CD8-positive, alpha-beta T cell (primary cell): ENCODE measurements at regions of chr1 and their contacts with region 1.

Region 1: DNA sequence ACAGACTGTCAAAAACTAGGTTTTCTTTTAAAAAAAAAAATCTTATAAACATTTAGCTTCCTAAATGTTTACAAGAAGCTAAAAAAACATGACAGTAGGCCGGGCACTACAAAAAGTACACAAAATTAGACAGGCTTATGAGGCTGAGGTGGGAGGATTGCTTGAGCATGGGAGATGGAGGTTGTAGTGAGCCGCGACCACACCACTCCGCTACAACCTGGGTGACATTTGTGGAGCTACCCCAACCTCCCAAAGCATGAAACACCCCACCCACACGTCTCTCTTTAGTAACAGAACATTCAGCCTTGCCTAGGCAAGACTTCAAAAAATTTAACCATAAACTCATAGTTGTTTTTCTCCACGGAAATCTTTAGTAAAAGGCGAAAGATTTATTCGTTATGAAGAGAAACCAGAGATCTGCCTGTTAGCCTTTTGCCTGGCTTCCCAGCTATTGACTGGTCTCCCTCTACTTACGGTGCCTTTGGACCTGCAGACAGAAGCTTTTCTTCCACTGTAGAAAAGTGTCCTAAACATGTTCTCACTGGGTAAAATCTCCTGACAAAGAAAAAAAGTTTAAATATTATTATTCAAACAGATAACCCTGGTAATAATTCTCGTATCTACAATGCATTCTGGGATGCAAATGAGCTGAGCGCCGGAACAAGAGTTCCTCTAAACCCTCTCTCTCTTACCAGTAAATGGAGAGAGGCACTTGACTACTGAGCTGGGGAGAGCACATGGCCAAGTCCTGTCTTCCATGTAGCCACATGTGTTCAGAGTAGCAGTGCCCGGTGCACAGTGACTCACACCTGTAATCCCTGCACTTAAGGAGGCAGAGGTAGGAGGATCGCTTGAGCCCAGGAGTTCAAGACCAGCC is 9.2 kb downstream of the RNU5D-1 start:
- DNase-seq: peak; percentile 36 to 92 (median 61)
- ATAC-seq: peak; percentile 84
- H3K4me3 ChIP-seq: peak overlapping the region in 1 of 2 experiments; percentile 11
- H3K4me3 Mint-ChIP-seq: peak overlapping the region; percentile 54
- H3K27ac ChIP-seq: peak overlapping the region; percentile 70 to 88
- H3K27ac Mint-ChIP-seq: peak overlapping the region; percentile 96
- H3K4me1 ChIP-seq: peaks cover 77% of the 10 kb centered on the region
- H3K4me1 Mint-ChIP-seq: peaks cover 73% of the 10 kb centered on the region
- H3K27me3 ChIP-seq: no peaks in the 10 kb centered on the region
- H3K27me3 Mint-ChIP-seq: no peaks in the 10 kb centered on the region
- CTCF ChIP-seq: no peak

Region 2: GRCh38 chr1:44318097-44319088 is 403.3 kb before region 1 on chr1:
- CTCF ChIA-PET with region 1: no interaction called
- POLR2A ChIA-PET with region 1: no interaction called
- intact Hi-C with region 1: no loop called
- DNase-seq: peak in 8 of 9 experiments; percentile 12 to 67 (median 50)
- ATAC-seq: no peak
- H3K4me3 ChIP-seq: no peak overlapping the region
- H3K4me3 Mint-ChIP-seq: no peak overlapping the region
- H3K27ac ChIP-seq: no peak overlapping the region
- H3K27ac Mint-ChIP-seq: no peak overlapping the region
- H3K4me1 ChIP-seq: no peaks in the 10 kb centered on the region
- H3K4me1 Mint-ChIP-seq: peaks cover 5% of the 10 kb centered on the region
- H3K27me3 ChIP-seq: no peaks in the 10 kb centered on the region
- H3K27me3 Mint-ChIP-seq: no peaks in the 10 kb centered on the region
- CTCF ChIP-seq: peak; percentile 89

Region 3: GRCh38 chr1:44523593-44524591 is 197.8 kb before region 1 on chr1:
- CTCF ChIA-PET with region 1: no interaction called
- POLR2A ChIA-PET with region 1: no interaction called
- intact Hi-C with region 1: no loop called
- DNase-seq: no peak
- ATAC-seq: no peak
- H3K4me3 ChIP-seq: no peak overlapping the region
- H3K4me3 Mint-ChIP-seq: no peak overlapping the region
- H3K27ac ChIP-seq: no peak overlapping the region
- H3K27ac Mint-ChIP-seq: no peak overlapping the region
- H3K4me1 ChIP-seq: no peaks in the 10 kb centered on the region
- H3K4me1 Mint-ChIP-seq: peaks cover 1% of the 10 kb centered on the region
- H3K27me3 ChIP-seq: no peaks in the 10 kb centered on the region
- H3K27me3 Mint-ChIP-seq: no peaks in the 10 kb centered on the region
- CTCF ChIP-seq: no peak

Region 4: DNA sequence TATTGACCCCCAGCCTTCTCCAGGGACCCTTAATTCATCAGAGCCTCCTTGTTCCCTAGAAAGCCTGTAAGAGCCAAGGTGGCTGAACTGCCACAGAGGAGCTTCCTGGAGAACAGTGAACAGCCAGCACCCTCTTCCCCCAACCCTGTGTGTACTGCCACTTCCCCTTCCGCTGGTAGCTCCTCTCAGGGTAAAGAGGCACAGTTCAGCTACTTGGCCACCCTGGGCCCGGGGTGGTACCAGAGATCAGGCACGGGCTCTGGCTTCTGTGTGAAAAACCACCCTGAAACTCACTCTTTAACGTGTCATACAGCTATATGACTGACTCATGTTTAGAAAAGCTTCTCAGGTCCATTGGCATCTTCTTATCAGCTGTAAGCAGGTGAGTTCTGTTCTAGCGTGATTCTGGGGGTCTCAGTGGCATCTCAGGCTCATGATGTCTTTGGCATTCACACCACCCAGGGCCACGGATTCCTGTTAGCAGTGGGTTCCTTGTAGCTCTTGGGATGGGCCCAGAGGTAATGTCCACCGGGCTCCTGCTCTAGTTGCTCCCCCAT is 24.9 kb before region 1 on chr1:
- CTCF ChIA-PET with region 1: interaction called, 4 read pairs
- POLR2A ChIA-PET with region 1: interaction called, 10 read pairs
- intact Hi-C with region 1: no loop called
- DNase-seq: peak; percentile 12 to 75 (median 44)
- ATAC-seq: peak; percentile 98
- H3K4me3 ChIP-seq: no peak overlapping the region
- H3K4me3 Mint-ChIP-seq: peak overlapping the region; percentile 58
- H3K27ac ChIP-seq: peak overlapping the region; percentile 37 to 86
- H3K27ac Mint-ChIP-seq: peak overlapping the region; percentile 91
- H3K4me1 ChIP-seq: peaks cover 20% of the 10 kb centered on the region
- H3K4me1 Mint-ChIP-seq: peaks cover 18% of the 10 kb centered on the region
- H3K27me3 ChIP-seq: no peaks in the 10 kb centered on the region
- H3K27me3 Mint-ChIP-seq: no peaks in the 10 kb centered on the region
- CTCF ChIP-seq: no peak

Region 5: DNA sequence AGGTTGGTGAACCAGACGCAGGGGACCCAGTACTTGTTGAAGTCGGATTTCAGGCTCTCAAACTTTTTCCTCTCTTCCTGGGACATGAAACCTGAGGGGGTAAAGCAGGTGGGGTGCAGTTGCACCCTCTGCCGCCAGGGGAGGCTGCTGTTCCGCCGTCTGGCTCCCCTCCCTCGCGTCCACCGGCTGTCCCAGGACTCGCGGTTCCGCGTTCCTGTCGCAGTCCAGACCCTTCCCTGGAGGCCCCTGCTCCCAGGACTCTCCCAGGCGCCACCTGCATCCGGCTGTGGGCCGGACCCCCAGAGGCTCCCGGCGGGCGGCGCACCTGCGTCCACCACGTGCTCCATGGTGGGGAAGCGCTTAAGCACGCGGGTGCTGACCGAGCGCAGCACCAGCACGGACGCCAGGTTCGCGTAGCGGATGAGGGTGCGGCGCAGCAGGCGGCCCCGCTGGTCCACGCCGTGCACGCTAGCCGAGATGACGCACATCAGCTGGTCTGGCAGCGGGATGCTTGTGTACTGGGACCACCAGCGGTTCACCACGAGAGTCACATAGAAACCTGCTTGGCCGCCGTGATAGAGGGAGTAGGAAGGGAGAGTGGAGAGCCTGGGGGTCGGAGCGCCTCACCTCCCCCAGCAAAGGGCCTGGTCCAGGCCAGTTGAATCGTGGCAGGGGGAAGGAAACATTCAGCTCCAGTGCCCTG is 64.6 kb after region 1 on chr1:
- CTCF ChIA-PET with region 1: interaction called, 3 read pairs
- POLR2A ChIA-PET with region 1: interaction called, 18 read pairs
- intact Hi-C with region 1: no loop called
- DNase-seq: peak in 8 of 9 experiments; percentile 63 to 89 (median 78)
- ATAC-seq: peak; percentile 85
- H3K4me3 ChIP-seq: peak overlapping the region; percentile 56 to 94
- H3K4me3 Mint-ChIP-seq: peak overlapping the region; percentile 82
- H3K27ac ChIP-seq: peak overlapping the region; percentile 33 to 63
- H3K27ac Mint-ChIP-seq: peak overlapping the region; percentile 86
- H3K4me1 ChIP-seq: peaks cover 34% of the 10 kb centered on the region
- H3K4me1 Mint-ChIP-seq: peaks cover 29% of the 10 kb centered on the region
- H3K27me3 ChIP-seq: no peaks in the 10 kb centered on the region
- H3K27me3 Mint-ChIP-seq: no peaks in the 10 kb centered on the region
- CTCF ChIP-seq: peak; percentile 100

Region 6: DNA sequence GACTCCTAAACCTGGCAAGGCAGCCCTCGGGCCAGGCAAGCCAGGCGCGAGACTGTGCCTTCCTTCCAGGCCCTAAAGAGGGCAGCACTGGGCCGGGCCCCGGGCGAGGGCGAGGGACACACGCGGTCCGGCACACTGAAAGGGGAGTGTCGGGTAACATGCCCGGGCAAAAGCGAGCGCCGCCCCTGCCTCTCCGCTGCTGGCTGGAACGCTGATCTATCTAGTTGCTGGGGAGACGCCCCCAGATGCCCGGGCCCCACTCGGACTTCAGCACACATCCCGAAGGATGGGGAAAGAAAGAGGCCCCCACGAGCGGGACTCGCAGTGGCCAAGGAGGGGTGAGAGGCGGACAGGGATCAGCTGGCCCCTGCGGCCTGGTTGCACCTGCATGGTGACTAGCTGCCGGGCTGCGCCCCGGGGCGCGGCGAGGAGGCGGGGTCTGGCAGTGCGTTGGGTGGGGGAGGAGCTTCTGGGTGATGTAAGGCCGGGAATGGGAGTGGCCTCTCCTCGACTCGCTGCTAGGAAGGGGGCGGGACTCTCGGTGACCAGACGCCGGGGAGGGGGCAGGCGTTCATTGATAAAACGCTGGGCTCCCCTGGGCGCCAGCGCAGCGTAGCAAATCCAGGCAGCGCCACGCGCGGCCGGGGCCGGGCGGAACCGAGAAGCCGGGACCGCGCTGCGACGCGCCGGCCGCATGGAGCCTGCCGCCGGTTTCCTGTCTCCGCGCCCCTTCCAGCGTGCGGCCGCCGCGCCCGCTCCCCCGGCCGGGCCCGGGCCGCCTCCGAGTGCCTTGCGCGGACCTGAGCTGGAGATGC is 78.3 kb after region 1 on chr1 and contains the start of gene PLK3:
- CTCF ChIA-PET with region 1: interaction called, 5 read pairs
- POLR2A ChIA-PET with region 1: interaction called, 17 read pairs
- intact Hi-C with region 1: no loop called
- DNase-seq: peak; percentile 97 to 99 (median 98)
- ATAC-seq: peak; percentile 83
- H3K4me3 ChIP-seq: peak within 1 kb of the TSS; percentile 79 to 95
- H3K4me3 Mint-ChIP-seq: peak within 1 kb of the TSS; percentile 87
- H3K27ac ChIP-seq: peak within 1 kb of the TSS; percentile 91 to 98
- H3K27ac Mint-ChIP-seq: peak within 1 kb of the TSS; percentile 98
- H3K4me1 ChIP-seq: peaks cover 29% of the 10 kb centered on the region
- H3K4me1 Mint-ChIP-seq: peaks cover 37% of the 10 kb centered on the region
- H3K27me3 ChIP-seq: no peaks in the 10 kb centered on the region
- H3K27me3 Mint-ChIP-seq: no peaks in the 10 kb centered on the region
- CTCF ChIP-seq: peak; percentile 81
- total RNA-seq, gene PLK3: 568 to 599 TPM

Region 7: DNA sequence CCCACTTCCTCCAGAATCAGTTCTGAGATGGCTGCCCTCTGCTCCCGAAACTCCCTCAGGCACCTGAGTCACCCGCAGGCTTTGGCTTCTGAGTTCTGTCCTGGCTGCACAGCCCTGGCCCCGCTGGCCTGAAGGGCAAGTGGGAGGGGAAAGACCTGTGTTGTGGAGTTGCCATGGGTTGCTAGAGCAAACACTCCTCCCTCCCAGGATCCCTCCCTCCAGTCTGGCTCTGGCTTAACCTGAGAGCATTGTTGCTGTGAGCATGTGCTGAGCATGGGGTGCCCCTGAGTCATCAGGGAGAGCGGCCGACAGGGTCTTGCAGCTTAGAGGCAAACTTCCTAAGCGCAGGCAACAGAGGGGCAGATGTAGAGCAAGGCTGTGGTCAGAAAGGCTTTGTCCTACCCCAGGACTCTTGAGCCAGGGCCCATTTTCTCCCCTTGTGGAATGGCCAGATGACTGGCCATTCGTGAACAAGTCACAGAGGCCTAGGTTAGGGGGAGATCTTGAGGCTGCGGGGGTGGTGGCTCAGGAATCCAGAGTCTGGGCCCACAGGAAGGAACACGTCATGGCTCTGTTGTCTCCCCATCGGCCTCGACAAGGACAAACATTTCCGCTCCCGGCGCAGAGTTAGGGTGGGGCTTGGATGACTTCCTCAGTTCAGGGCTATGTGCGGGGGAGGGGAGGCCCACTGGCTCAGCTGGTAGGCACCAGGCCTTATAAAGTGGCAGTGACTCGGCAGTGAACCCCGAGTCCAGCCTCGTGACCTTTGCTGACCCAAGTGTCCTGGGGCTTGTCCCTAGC is 85.7 kb after region 1 on chr1 and contains the start of gene DYNLT4:
- CTCF ChIA-PET with region 1: interaction called, 3 read pairs
- POLR2A ChIA-PET with region 1: interaction called, 22 read pairs
- intact Hi-C with region 1: no loop called
- DNase-seq: peak; percentile 83 to 98 (median 93)
- ATAC-seq: peak; percentile 58
- H3K4me3 ChIP-seq: peak within 1 kb of the TSS in 1 of 2 experiments; percentile 35
- H3K4me3 Mint-ChIP-seq: peak within 1 kb of the TSS; percentile 60
- H3K27ac ChIP-seq: peak within 1 kb of the TSS; percentile 93 to 96
- H3K27ac Mint-ChIP-seq: peak within 1 kb of the TSS; percentile 99
- H3K4me1 ChIP-seq: peaks cover 70% of the 10 kb centered on the region
- H3K4me1 Mint-ChIP-seq: peaks cover 78% of the 10 kb centered on the region
- H3K27me3 ChIP-seq: no peaks in the 10 kb centered on the region
- H3K27me3 Mint-ChIP-seq: no peaks in the 10 kb centered on the region
- CTCF ChIP-seq: no peak
- total RNA-seq, gene DYNLT4: 2.2 to 2.5 TPM

Region 8: GRCh38 chr1:44812822-44813543 is 91.3 kb after region 1 on chr1:
- CTCF ChIA-PET with region 1: interaction called, 3 read pairs
- POLR2A ChIA-PET with region 1: interaction called, 22 read pairs
- intact Hi-C with region 1: no loop called
- DNase-seq: peak in 2 of 9 experiments; percentile 27 to 50
- ATAC-seq: no peak
- H3K4me3 ChIP-seq: peak overlapping the region; percentile 59 to 74
- H3K4me3 Mint-ChIP-seq: peak overlapping the region; percentile 84
- H3K27ac ChIP-seq: peak overlapping the region in 1 of 2 experiments; percentile 85
- H3K27ac Mint-ChIP-seq: peak overlapping the region; percentile 99
- H3K4me1 ChIP-seq: peaks cover 62% of the 10 kb centered on the region
- H3K4me1 Mint-ChIP-seq: peaks cover 67% of the 10 kb centered on the region
- H3K27me3 ChIP-seq: no peaks in the 10 kb centered on the region
- H3K27me3 Mint-ChIP-seq: no peaks in the 10 kb centered on the region
- CTCF ChIP-seq: no peak

Region 9: GRCh38 chr1:44819608-44820327 is 98.0 kb after region 1 on chr1:
- CTCF ChIA-PET with region 1: no interaction called
- POLR2A ChIA-PET with region 1: interaction called, 17 read pairs
- intact Hi-C with region 1: no loop called
- DNase-seq: peak; percentile 72 to 94 (median 80)
- ATAC-seq: peak; percentile 79
- H3K4me3 ChIP-seq: peak overlapping the region; percentile 86 to 87
- H3K4me3 Mint-ChIP-seq: peak overlapping the region; percentile 92
- H3K27ac ChIP-seq: peak overlapping the region; percentile 99 to 100
- H3K27ac Mint-ChIP-seq: peak overlapping the region; percentile 100
- H3K4me1 ChIP-seq: peaks cover 19% of the 10 kb centered on the region
- H3K4me1 Mint-ChIP-seq: peaks cover 35% of the 10 kb centered on the region
- H3K27me3 ChIP-seq: no peaks in the 10 kb centered on the region
- H3K27me3 Mint-ChIP-seq: no peaks in the 10 kb centered on the region
- CTCF ChIP-seq: no peak

Region 10: DNA sequence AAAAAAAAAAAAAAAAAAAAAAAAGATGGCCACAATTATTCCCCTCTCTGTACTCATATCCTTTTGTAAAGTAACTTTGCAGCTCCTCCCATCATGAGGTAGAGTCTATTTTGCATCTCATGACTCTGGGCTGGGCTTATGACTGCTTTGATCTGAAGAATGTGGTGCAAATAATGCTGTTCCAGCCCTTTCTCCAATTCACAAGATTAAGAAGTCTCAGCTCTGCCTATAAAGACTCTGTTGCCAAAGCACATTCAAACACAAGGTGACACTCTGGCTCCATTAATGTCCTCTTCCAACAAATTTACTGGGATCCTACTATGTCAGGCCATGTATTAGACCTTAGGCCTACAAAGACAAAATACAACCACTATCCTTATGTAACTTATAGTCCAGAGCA is 186.2 kb after region 1 on chr1:
- CTCF ChIA-PET with region 1: no interaction called
- POLR2A ChIA-PET with region 1: no interaction called
- intact Hi-C with region 1: no loop called
- DNase-seq: no peak
- ATAC-seq: no peak
- H3K4me3 ChIP-seq: no peak overlapping the region
- H3K4me3 Mint-ChIP-seq: no peak overlapping the region
- H3K27ac ChIP-seq: no peak overlapping the region
- H3K27ac Mint-ChIP-seq: no peak overlapping the region
- H3K4me1 ChIP-seq: no peaks in the 10 kb centered on the region
- H3K4me1 Mint-ChIP-seq: no peaks in the 10 kb centered on the region
- H3K27me3 ChIP-seq: no peaks in the 10 kb centered on the region
- H3K27me3 Mint-ChIP-seq: no peaks in the 10 kb centered on the region
- CTCF ChIP-seq: no peak

Region 11: GRCh38 chr1:45103534-45103933 is 381.8 kb after region 1 on chr1:
- CTCF ChIA-PET with region 1: no interaction called
- POLR2A ChIA-PET with region 1: no interaction called
- intact Hi-C with region 1: no loop called
- DNase-seq: no peak
- ATAC-seq: no peak
- H3K4me3 ChIP-seq: no peak overlapping the region
- H3K4me3 Mint-ChIP-seq: no peak overlapping the region
- H3K27ac ChIP-seq: no peak overlapping the region
- H3K27ac Mint-ChIP-seq: no peak overlapping the region
- H3K4me1 ChIP-seq: no peaks in the 10 kb centered on the region
- H3K4me1 Mint-ChIP-seq: no peaks in the 10 kb centered on the region
- H3K27me3 ChIP-seq: no peaks in the 10 kb centered on the region
- H3K27me3 Mint-ChIP-seq: no peaks in the 10 kb centered on the region
- CTCF ChIP-seq: no peak